ENCODE measurements at regions of chrX and their contacts with region 1.

Region 1: DNA sequence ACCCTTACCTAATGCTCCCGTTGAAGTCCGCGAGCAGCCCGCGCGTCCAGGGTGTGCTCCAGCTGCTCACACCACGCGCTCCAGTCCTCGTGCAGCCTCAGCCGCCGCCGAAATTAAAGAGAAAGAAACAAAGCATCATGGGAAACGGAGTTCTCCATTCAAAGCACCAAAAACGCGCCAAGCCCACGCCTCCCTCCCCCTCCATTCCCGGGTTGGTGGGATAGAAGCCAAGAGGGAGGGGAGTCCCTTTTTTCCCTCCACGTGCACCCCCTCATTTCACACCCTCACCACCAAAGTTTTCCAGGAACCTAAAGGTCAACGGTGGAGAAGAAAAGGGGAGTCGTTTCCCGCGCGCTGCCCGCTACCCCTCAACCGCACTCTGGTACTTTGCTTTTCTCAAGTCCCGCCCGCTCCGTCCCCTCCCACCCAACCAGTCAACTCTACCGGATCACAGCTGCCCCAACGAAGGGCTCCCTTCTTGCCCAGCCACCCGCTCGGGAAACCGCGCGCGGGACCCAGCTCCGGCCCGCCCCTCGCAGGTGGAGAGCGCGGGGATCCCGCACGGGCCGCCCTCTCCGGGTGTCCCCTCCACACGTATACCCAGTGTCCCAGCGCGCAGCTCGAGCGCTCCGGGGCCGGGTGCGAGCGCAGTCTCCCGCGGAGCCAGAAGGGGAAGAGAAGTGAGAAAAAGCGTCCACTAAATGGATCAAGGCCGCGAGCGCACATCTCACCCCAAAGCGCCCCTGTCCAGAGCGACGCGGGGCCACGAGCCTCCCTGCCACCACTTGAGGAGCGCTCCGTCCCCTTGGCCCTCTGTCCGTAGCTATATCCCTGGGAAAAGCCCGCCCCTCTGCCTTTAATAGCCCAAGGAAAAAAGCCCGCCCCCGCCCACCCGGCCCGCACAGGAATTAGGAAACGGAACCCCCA is 65.1 kb upstream of the CCDC160 start:
- DNase-seq: peak; percentile 39
- H3K4me3 Mint-ChIP-seq: peak overlapping the region; percentile 96
- H3K27ac Mint-ChIP-seq: peak overlapping the region; percentile 97
- H3K4me1 Mint-ChIP-seq: peaks cover 24% of the 10 kb centered on the region
- H3K27me3 Mint-ChIP-seq: no peaks in the 10 kb centered on the region

Region 2: DNA sequence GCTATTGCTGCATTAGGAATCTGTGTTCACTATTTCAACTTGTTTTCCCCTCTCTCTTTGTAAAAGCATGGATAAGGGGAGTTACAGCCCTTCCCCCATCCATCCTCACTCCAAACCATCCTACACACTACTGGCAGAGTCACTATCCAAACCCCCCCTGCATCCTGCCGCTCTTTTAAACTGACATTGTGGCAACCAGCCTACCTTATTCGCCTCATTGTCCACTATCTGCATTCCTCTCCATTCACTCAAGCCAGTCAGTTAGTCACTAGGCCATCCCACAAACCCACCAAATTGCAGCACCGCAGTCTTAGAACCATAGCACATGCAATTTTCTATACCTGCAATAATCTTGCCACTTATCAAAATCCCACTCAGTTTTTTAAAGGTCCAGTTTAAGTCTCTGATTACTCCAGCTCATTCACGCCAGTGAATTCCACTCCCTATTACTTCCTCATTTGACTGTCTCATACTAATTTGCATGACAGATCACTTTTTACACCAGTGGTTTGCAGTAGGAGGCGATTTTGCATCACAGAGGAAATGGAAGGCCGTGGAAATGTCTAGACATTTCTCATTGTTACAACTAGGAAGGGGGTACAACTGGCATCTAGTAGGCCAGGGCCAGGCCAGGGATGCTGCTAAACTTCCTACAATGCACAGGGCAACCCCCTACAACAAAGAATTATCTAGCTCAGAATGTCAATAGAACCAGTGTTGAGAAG is 1395.3 kb before region 1 on chrX:
- intact Hi-C with region 1: loop called (anchors 10 kb)
- DNase-seq: no peak
- H3K4me3 Mint-ChIP-seq: no peak overlapping the region
- H3K27ac Mint-ChIP-seq: no peak overlapping the region
- H3K4me1 Mint-ChIP-seq: peaks cover 19% of the 10 kb centered on the region
- H3K27me3 Mint-ChIP-seq: no peaks in the 10 kb centered on the region

Region 3: GRCh38 chrX:133985164-133985966 is 186.6 kb before region 1 on chrX and contains the start of gene GPC3:
- intact Hi-C with region 1: loop called (anchors 10 kb)
- DNase-seq: peak; percentile 16
- H3K4me3 Mint-ChIP-seq: peak within 1 kb of the TSS; percentile 65
- H3K27ac Mint-ChIP-seq: no peak within 1 kb of the TSS
- H3K4me1 Mint-ChIP-seq: no peaks in the 10 kb centered on the region
- H3K27me3 Mint-ChIP-seq: peaks cover 25% of the 10 kb centered on the region
- total RNA-seq, gene GPC3: 0.24 and 0.39 TPM in 2 replicates

Region 4: DNA sequence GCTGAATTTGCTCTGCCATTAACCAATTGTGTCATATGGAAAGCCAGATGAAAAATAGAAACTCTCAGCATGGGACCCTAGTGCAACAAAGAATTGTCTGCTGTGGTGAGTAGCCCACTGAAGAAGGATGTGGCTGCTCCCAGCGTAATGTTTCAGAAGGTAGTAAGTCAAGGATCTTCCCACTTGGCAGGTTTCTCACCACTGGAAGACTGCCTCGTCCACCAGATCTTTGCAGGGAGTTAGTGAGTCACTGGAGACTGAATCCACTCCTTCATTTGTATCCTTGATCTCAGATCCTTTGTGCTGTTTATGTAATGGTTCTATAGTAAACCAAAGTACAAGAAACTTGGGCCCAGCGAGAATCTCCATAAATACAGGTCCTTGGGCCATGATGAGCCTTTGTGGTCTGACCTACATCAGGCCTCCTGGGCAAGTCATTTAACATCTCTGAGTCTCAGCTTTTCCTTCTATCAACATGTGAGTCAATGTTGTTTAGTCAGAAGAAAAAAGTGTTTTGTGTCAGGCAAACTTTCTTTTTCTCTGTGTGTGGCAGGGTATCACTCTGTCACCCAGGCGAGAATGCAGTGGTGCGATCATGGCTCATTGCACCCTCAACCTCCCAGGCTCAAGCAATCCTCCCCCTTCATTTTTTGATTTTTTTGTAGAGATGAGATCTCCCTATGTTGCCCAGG is 13.0 kb before region 1 on chrX:
- intact Hi-C with region 1: loop called (anchors 1 kb)
- DNase-seq: no peak
- H3K4me3 Mint-ChIP-seq: no peak overlapping the region
- H3K27ac Mint-ChIP-seq: peak overlapping the region; percentile 78
- H3K4me1 Mint-ChIP-seq: peaks cover 24% of the 10 kb centered on the region
- H3K27me3 Mint-ChIP-seq: no peaks in the 10 kb centered on the region

Region 5: DNA sequence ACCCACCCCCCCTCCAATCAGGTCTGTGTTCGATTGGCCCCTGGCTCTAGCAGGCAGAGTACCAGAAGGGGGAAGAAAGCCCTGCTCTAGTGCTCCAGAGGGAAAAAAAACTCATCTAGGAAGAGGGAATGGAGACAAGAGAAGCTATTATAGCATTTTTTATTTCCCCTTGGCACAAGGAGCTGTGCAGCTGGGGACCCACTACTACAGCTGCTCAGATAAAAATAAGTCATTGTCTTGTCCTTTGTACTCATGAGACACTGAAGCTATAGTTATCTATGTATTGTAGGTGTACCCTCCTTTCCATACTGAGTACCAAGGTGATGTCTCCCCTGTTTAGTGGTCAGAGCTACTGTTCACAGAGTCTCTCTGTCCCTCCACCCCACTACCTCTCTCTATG is 79.3 kb after region 1 on chrX:
- intact Hi-C with region 1: loop called (anchors 5 kb)
- DNase-seq: no peak
- H3K4me3 Mint-ChIP-seq: no peak overlapping the region
- H3K27ac Mint-ChIP-seq: no peak overlapping the region
- H3K4me1 Mint-ChIP-seq: peaks cover 5% of the 10 kb centered on the region
- H3K27me3 Mint-ChIP-seq: no peaks in the 10 kb centered on the region

Region 6: DNA sequence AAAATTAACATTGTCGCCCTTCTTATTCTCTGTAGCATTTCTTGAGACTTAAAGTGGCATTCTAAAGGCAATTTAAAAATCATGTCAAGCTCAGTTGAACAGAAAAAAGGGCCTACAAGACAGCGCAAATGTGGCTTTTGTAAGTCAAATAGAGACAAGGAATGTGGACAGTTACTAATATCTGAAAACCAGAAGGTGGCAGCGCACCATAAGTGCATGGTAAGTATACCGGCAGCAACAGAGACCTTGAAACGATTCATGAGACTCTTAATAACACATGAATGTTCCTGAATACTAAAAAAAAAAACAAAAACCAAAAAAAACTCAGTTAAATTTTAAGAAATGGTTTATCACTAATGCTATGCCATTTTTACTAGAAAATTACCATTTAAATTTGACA is 205.6 kb after region 1 on chrX:
- intact Hi-C with region 1: loop called (anchors 1 kb)
- DNase-seq: no peak
- H3K4me3 Mint-ChIP-seq: peak overlapping the region; percentile 11
- H3K27ac Mint-ChIP-seq: no peak overlapping the region
- H3K4me1 Mint-ChIP-seq: peaks cover 20% of the 10 kb centered on the region
- H3K27me3 Mint-ChIP-seq: no peaks in the 10 kb centered on the region

Region 7: DNA sequence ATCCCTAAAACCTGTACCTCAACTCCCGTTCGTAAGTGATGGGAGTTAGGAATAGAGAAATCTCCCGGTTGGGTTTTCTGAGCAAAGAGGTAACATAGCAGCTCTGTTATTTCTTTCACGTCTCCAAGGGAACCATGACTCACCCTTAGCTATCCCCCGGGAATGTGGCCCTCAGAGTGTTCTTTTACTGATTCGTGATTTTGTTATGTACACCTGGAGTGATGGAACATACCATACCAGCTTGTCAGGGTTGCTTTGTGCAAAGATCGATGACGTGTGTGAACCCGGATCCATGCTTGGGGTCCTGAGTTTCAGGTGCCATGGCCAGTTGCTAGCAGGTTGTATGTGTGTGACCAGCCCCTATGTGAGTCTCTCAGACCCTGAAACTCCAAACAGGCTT is 340.6 kb after region 1 on chrX:
- intact Hi-C with region 1: no loop called
- DNase-seq: no peak
- H3K4me3 Mint-ChIP-seq: no peak overlapping the region
- H3K27ac Mint-ChIP-seq: no peak overlapping the region
- H3K4me1 Mint-ChIP-seq: no peaks in the 10 kb centered on the region
- H3K27me3 Mint-ChIP-seq: no peaks in the 10 kb centered on the region

Region 8: GRCh38 chrX:135973548-135974278 is 1801.8 kb after region 1 on chrX and contains the start of gene MMGT1:
- intact Hi-C with region 1: loop called (anchors 5 kb)
- DNase-seq: peak; percentile 74
- H3K4me3 Mint-ChIP-seq: peak within 1 kb of the TSS; percentile 90
- H3K27ac Mint-ChIP-seq: peak within 1 kb of the TSS; percentile 91
- H3K4me1 Mint-ChIP-seq: peaks cover 40% of the 10 kb centered on the region
- H3K27me3 Mint-ChIP-seq: peaks cover 2% of the 10 kb centered on the region
- total RNA-seq, gene MMGT1: 25.2 and 26.4 TPM in 2 replicates

Measured in activated T-helper 1 cell treated with anti-CD3 and anti-CD28 coated beads, Interleukin-12 subunit alpha, Interleukin-12 subunit beta, Interleukin-2, Interleukin-4 antibody, amounts not matched to agents 30 ng/mL and 10 ng/mL and 1 ng/mL, durations not matched to agents 14 hours and 24 hours and 36 hours (primary cell).